Panc1 (cell line): ENCODE measurements at regions of chr3 and their contacts with region 1.

Region 1: GRCh38 chr3:85330071-85330470 is 371.3 kb downstream of the CADM2 start:
- DNase-seq: no peak
- ATAC-seq: no peak
- H3K4me3 ChIP-seq: no peak overlapping the region
- H3K27ac ChIP-seq: no peak overlapping the region
- H3K4me1 ChIP-seq: no peaks in the 10 kb centered on the region
- H3K27me3 ChIP-seq: no peaks in the 10 kb centered on the region
- CTCF ChIP-seq: no peak

Region 2: DNA sequence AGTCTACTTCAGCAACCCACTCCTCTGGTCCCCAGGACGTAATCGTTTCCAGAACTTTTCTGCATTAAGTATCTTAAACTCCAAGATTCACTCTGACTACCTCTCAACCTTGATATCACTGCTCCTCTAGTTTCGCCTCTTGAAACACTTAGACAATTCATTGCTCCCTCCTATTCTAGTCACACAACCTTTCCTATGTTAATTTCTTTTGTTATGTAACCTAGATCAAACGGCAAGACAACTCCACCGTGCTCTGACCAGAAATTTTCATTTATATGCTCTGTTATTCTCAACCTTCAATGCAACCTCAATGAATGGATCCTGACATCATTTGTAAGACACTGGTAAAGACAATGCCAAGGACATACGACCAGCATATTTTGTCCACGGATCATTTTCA is 300.0 kb before region 1 on chr3:
- CTCF ChIA-PET with region 1: no interaction called
- POLR2A ChIA-PET with region 1: interaction called, 10 read pairs
- in situ Hi-C with region 1: no loop called
- intact Hi-C with region 1: no loop called
- DNase-seq: no peak
- ATAC-seq: no peak
- H3K4me3 ChIP-seq: no peak overlapping the region
- H3K27ac ChIP-seq: no peak overlapping the region
- H3K4me1 ChIP-seq: no peaks in the 10 kb centered on the region
- H3K27me3 ChIP-seq: no peaks in the 10 kb centered on the region
- CTCF ChIP-seq: no peak

Region 3: DNA sequence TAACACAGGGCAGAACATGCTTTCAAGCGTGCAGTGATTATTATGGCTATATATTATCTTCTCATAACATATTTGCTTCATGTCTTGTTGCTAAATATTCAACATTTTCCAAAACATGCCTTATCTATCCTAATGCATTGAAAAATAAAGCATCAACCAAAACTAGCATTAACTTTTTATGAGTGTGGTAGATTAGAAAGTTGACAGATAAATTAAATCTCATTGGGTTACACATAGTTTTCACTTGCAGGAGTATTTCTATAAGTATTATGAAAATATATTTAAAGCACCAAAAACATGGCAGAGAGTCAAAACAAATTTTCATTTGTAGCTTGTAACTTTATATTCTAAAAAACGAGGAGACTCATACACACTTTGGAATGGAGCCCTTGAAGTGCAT is 229.8 kb before region 1 on chr3:
- CTCF ChIA-PET with region 1: no interaction called
- POLR2A ChIA-PET with region 1: no interaction called
- in situ Hi-C with region 1: no loop called
- intact Hi-C with region 1: no loop called
- DNase-seq: no peak
- ATAC-seq: no peak
- H3K4me3 ChIP-seq: no peak overlapping the region
- H3K27ac ChIP-seq: no peak overlapping the region
- H3K4me1 ChIP-seq: no peaks in the 10 kb centered on the region
- H3K27me3 ChIP-seq: no peaks in the 10 kb centered on the region
- CTCF ChIP-seq: no peak